ENCODE measurements at regions of chr4 and their contacts with region 1.

Region 1: GRCh38 chr4:145481164-145481941 is at the start of gene SMAD1:
- DNase-seq: peak in 6 of 14 experiments; percentile 17 to 51 (median 35)
- ATAC-seq: peak; percentile 57
- H3K4me3 ChIP-seq: peak within 1 kb of the TSS; percentile 53
- H3K4me3 Mint-ChIP-seq: peak within 1 kb of the TSS; percentile 98
- H3K27ac ChIP-seq: no peak within 1 kb of the TSS
- H3K27ac Mint-ChIP-seq: peak within 1 kb of the TSS; percentile 88
- H3K4me1 ChIP-seq: peaks cover 12% of the 10 kb centered on the region
- H3K4me1 Mint-ChIP-seq: peaks cover 8% of the 10 kb centered on the region
- H3K27me3 ChIP-seq: peaks cover 10 to 16% of the 10 kb centered on the region in 2 experiments
- H3K27me3 Mint-ChIP-seq: no peaks in the 10 kb centered on the region
- CTCF ChIP-seq: no peak
- total RNA-seq, gene SMAD1: 9.7 to 11.5 TPM

Region 2: DNA sequence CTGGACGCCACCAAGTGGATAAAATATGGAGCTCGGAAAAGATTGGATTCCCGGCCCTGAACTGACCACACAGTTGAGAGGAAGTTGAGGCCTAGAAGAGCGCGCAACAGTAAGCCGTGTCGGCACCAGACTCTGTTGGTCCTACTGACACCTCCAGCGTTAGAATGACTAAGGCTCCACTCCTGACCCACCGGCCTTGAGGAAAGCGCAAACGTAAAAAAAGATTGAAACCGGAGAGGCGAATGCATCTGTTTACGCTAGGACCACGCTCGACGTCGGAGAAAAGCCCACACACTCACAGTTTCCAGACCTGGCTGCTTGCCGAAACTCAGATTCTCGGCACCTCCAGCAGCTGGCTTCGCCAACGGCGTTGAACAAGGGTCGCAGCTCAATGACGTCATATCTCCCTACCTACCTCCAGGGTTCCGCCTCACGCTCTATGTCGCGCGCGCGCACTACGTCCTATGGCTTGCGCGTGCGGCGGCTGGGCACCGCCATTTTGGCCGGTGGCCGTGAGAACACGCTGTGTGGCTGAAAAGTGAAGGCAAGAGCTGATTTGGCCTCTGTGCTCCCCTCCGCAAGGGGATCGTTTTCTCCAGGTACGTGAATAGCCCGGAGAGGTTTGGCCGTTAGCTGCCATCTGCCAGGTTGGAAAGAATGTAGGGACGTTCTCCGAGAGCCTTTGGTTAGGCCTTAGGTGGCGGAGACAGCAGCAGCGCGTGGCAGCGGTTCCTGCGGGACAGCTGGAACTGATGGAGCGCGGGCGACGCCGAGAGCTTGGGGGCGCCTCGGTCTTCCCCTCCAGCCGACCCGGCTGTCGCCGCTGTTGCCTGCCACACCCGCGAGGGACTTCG is 383.3 kb before region 1 on chr4 and contains the starts of genes ABCE1 and ANAPC10:
- CTCF ChIA-PET with region 1: no interaction called
- POLR2A ChIA-PET with region 1: no interaction called
- intact Hi-C with region 1: loop called in 1 of 2 experiments (anchors 5 kb)
- DNase-seq: peak; percentile 88 to 100 (median 93)
- ATAC-seq: peak; percentile 89
- H3K4me3 ChIP-seq: peak within 1 kb of the TSS; percentile 93
- H3K4me3 Mint-ChIP-seq: peak within 1 kb of the TSS; percentile 95
- H3K27ac ChIP-seq: peak within 1 kb of the TSS; percentile 76 to 90
- H3K27ac Mint-ChIP-seq: peak within 1 kb of the TSS; percentile 99
- H3K4me1 ChIP-seq: peaks cover 23% of the 10 kb centered on the region
- H3K4me1 Mint-ChIP-seq: peaks cover 48% of the 10 kb centered on the region
- H3K27me3 ChIP-seq: no peaks in the 10 kb centered on the region
- H3K27me3 Mint-ChIP-seq: no peaks in the 10 kb centered on the region
- CTCF ChIP-seq: no peak
- total RNA-seq, gene ABCE1: 50.1 to 50.6 TPM
- total RNA-seq, gene ANAPC10: 25.8 to 27.5 TPM

Region 3: DNA sequence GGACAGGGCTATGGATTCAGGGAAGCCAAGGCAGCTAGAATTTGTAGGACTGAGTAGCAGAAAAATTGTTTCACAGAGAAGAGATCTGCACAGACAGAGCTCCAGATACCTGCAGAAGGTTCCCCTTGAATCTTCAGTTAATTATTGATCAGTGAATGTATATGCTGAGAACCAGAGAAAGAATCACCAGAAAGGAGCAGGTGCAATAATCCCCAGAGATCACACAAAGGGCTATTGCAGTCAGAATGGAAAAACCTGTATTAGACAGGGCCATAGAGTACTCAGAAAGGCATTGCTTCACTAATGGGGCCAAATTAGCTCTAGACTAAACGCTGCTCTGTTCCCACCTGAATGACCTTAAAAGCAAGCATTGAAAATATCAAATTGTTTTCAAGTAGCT is 35.2 kb before region 1 on chr4:
- CTCF ChIA-PET with region 1: no interaction called
- POLR2A ChIA-PET with region 1: no interaction called
- intact Hi-C with region 1: no loop called
- DNase-seq: no peak
- ATAC-seq: no peak
- H3K4me3 ChIP-seq: no peak overlapping the region
- H3K4me3 Mint-ChIP-seq: no peak overlapping the region
- H3K27ac ChIP-seq: no peak overlapping the region
- H3K27ac Mint-ChIP-seq: no peak overlapping the region
- H3K4me1 ChIP-seq: no peaks in the 10 kb centered on the region
- H3K4me1 Mint-ChIP-seq: no peaks in the 10 kb centered on the region
- H3K27me3 ChIP-seq: no peaks in the 10 kb centered on the region
- H3K27me3 Mint-ChIP-seq: peaks cover 16% of the 10 kb centered on the region
- CTCF ChIP-seq: no peak

Region 4: DNA sequence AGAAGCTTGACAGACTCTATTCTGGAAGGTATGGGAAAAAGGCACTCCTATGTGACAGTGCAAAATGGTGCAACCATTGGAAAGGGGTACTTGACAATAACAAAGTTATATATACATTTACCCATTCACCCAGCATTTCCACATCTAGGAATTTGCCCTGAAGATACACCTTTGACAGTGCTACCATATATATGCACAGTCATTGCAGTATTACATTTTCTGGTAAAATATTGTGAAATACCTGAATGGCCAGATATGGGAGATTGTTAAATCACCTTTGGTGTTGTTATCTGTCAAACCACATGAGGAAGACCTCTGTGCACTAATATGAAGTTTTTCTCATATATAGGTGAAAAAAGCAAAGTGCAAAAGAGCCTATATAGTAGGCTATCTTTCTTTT is 53.8 kb after region 1 on chr4:
- CTCF ChIA-PET with region 1: no interaction called
- POLR2A ChIA-PET with region 1: no interaction called
- intact Hi-C with region 1: loop called in 1 of 2 experiments (anchors 2 kb)
- DNase-seq: no peak
- ATAC-seq: no peak
- H3K4me3 ChIP-seq: no peak overlapping the region
- H3K4me3 Mint-ChIP-seq: no peak overlapping the region
- H3K27ac ChIP-seq: no peak overlapping the region
- H3K27ac Mint-ChIP-seq: no peak overlapping the region
- H3K4me1 ChIP-seq: no peaks in the 10 kb centered on the region
- H3K4me1 Mint-ChIP-seq: no peaks in the 10 kb centered on the region
- H3K27me3 ChIP-seq: peaks cover 0 to 3% of the 10 kb centered on the region in 2 experiments
- H3K27me3 Mint-ChIP-seq: no peaks in the 10 kb centered on the region
- CTCF ChIP-seq: no peak

Region 5: DNA sequence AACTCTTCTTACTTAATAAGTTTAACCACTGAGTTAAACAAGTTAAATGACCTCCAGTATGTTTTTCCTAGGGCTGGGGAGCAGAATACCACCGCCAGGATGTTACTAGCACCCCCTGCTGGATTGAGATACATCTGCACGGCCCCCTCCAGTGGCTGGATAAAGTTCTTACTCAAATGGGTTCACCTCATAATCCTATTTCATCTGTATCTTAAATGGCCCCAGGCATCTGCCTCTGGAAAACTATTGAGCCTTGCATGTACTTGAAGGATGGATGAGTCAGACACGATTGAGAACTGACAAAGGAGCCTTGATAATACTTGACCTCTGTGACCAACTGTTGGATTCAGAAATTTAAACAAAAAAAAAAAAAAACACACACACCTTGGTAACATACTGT is 76.4 kb after region 1 on chr4:
- CTCF ChIA-PET with region 1: no interaction called
- POLR2A ChIA-PET with region 1: no interaction called
- intact Hi-C with region 1: loop called in 1 of 2 experiments (anchors 2 kb)
- DNase-seq: peak in 11 of 14 experiments; percentile 11 to 65 (median 28)
- ATAC-seq: peak; percentile 97
- H3K4me3 ChIP-seq: no peak overlapping the region
- H3K4me3 Mint-ChIP-seq: no peak overlapping the region
- H3K27ac ChIP-seq: no peak overlapping the region
- H3K27ac Mint-ChIP-seq: no peak overlapping the region
- H3K4me1 ChIP-seq: no peaks in the 10 kb centered on the region
- H3K4me1 Mint-ChIP-seq: no peaks in the 10 kb centered on the region
- H3K27me3 ChIP-seq: no peaks in the 10 kb centered on the region
- H3K27me3 Mint-ChIP-seq: no peaks in the 10 kb centered on the region
- CTCF ChIP-seq: peak; percentile 91

Region 6: GRCh38 chr4:145732895-145733880 is 251.8 kb after region 1 on chr4:
- CTCF ChIA-PET with region 1: no interaction called
- POLR2A ChIA-PET with region 1: no interaction called
- intact Hi-C with region 1: loop called in 1 of 2 experiments (anchors 5 kb)
- DNase-seq: peak; percentile 60 to 92 (median 78)
- ATAC-seq: peak; percentile 95
- H3K4me3 ChIP-seq: peak overlapping the region; percentile 76
- H3K4me3 Mint-ChIP-seq: peak overlapping the region; percentile 89
- H3K27ac ChIP-seq: peak overlapping the region in 1 of 2 donors; percentile 35
- H3K27ac Mint-ChIP-seq: peak overlapping the region; percentile 58
- H3K4me1 ChIP-seq: peaks cover 14% of the 10 kb centered on the region
- H3K4me1 Mint-ChIP-seq: peaks cover 21% of the 10 kb centered on the region
- H3K27me3 ChIP-seq: no peaks in the 10 kb centered on the region
- H3K27me3 Mint-ChIP-seq: no peaks in the 10 kb centered on the region
- CTCF ChIP-seq: no peak

Region 7: DNA sequence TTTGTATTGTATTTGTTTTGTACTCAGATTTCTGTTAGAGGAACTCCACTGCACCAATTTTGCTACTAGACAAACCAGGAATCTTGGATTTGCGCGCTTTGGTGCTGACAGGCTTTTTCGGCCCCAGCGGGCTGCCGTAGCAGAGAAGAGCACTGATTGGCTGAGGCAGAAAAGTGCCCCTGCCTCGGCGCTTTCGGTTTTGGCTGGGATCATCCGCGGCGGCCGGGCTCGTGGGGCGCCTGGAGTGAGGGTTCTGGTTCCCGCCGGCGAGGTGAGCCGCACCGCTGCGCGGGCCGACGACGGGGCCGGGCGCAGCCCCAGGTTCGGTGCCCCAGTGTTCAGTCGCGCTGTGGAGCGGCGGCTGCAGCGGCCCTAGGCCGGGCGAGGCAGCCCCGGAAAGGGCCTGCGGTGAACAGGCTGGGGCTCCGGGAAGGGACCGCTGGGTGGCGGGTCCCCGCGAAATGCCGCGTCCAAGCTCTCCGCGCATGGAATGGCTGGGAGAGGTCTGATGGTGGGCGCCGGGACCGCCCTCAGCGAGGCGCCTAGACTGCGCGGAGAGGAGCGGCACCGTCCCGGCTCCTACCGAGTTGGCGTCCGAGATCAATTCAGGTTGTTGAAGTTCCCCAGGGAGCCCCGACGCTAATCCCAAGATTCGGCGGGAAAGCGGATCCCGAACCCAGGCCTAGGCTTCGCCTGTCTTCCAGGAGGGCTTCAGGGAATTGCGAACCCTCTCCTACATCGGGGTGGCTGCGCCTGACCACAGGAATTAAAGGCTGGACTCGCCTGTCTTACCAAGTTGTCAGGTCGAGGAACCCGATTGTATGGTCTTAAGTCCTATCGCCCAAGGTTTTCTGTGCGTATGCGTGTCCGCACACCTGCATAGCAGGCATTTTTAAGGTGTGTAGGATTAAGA is 694.4 kb after region 1 on chr4 and contains the start of gene LSM6:
- CTCF ChIA-PET with region 1: no interaction called
- POLR2A ChIA-PET with region 1: no interaction called
- intact Hi-C with region 1: loop called in 1 of 2 experiments (anchors 10 kb)
- DNase-seq: peak; percentile 66 to 92 (median 76)
- ATAC-seq: peak; percentile 90
- H3K4me3 ChIP-seq: peak within 1 kb of the TSS; percentile 94
- H3K4me3 Mint-ChIP-seq: peak within 1 kb of the TSS; percentile 92
- H3K27ac ChIP-seq: peak within 1 kb of the TSS; percentile 54 to 71
- H3K27ac Mint-ChIP-seq: peak within 1 kb of the TSS; percentile 99
- H3K4me1 ChIP-seq: peaks cover 21% of the 10 kb centered on the region
- H3K4me1 Mint-ChIP-seq: peaks cover 62% of the 10 kb centered on the region
- H3K27me3 ChIP-seq: no peaks in the 10 kb centered on the region
- H3K27me3 Mint-ChIP-seq: no peaks in the 10 kb centered on the region
- CTCF ChIP-seq: no peak
- total RNA-seq, gene LSM6: 33.8 to 34.2 TPM

Measured in CD4-positive, alpha-beta T cell (primary cell).